Heart left ventricle (tissue), 16 donors: ENCODE measurements at regions of chr18 and their contacts with region 1.

Region 1: GRCh38 chr18:9516437-9517064 is 41.2 kb downstream of the RALBP1 start:
- DNase-seq: no peak
- ATAC-seq: peak in 1 of 4 donors; percentile 46
- H3K4me3 ChIP-seq: no peak overlapping the region
- H3K27ac ChIP-seq: peak overlapping the region in 1 of 12 donors; percentile 38
- H3K4me1 ChIP-seq: peaks cover 0 to 31% (median 1%) of the 10 kb centered on the region in 12 donors
- H3K27me3 ChIP-seq: no peaks in the 10 kb centered on the region
- CTCF ChIP-seq: peak; percentile 76 to 89 (median 82)
- POLR2A ChIP-seq: no peak

Region 2: GRCh38 chr18:9066817-9067306 is 449.7 kb before region 1 on chr18:
- intact Hi-C with region 1: loop called in 5 of 10 experiments (anchors 5 to 10 kb)
- DNase-seq: no peak
- ATAC-seq: no peak
- H3K4me3 ChIP-seq: no peak overlapping the region
- H3K27ac ChIP-seq: no peak overlapping the region
- H3K4me1 ChIP-seq: peaks cover 0 to 37% (median 0%) of the 10 kb centered on the region in 12 donors
- H3K27me3 ChIP-seq: no peaks in the 10 kb centered on the region
- CTCF ChIP-seq: no peak
- POLR2A ChIP-seq: no peak

Region 3: GRCh38 chr18:9079818-9080528 is 436.6 kb before region 1 on chr18:
- intact Hi-C with region 1: loop called in 4 of 10 experiments (anchors 10 kb)
- DNase-seq: no peak
- ATAC-seq: peak in 2 of 4 donors; percentile 41 to 55
- H3K4me3 ChIP-seq: no peak overlapping the region
- H3K27ac ChIP-seq: peak overlapping the region in 2 of 12 donors; percentile 13 to 84
- H3K4me1 ChIP-seq: peaks cover 0 to 48% (median 0%) of the 10 kb centered on the region in 12 donors
- H3K27me3 ChIP-seq: no peaks in the 10 kb centered on the region
- CTCF ChIP-seq: no peak
- POLR2A ChIP-seq: no peak

Region 4: DNA sequence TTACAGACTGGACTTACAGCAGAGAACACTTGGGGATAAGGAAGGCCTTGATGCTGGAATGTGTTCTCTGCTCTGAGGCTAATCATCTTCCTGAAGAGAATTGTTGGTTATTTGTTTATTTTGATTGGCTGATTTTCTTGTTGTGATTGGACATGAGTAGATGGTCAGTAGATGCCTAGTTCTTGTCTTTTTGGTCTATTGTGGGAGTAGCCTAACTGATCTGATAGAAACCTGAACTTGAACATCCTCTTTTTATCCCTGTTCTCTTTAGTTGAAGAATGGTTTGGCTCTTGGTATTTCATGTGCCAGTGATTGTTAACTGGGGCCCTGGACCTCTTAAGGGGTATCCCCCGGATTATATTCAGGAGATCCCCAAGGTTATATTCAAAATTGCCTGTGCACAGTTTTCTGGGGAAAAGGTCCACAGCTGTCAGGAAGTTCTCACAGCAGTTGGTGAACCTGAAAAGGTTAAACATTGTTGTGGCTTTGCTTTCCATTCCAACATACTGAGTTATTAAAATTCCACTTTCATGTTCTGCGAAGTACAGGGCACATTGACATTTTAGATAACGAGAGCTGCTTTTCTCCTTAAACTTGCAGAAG is 168.4 kb before region 1 on chr18:
- intact Hi-C with region 1: loop called in 1 of 10 experiments (anchors 10 kb)
- DNase-seq: no peak
- ATAC-seq: no peak
- H3K4me3 ChIP-seq: no peak overlapping the region
- H3K27ac ChIP-seq: no peak overlapping the region
- H3K4me1 ChIP-seq: peaks cover 0 to 18% (median 4%) of the 10 kb centered on the region in 12 donors
- H3K27me3 ChIP-seq: no peaks in the 10 kb centered on the region
- CTCF ChIP-seq: no peak
- POLR2A ChIP-seq: no peak

Region 5: DNA sequence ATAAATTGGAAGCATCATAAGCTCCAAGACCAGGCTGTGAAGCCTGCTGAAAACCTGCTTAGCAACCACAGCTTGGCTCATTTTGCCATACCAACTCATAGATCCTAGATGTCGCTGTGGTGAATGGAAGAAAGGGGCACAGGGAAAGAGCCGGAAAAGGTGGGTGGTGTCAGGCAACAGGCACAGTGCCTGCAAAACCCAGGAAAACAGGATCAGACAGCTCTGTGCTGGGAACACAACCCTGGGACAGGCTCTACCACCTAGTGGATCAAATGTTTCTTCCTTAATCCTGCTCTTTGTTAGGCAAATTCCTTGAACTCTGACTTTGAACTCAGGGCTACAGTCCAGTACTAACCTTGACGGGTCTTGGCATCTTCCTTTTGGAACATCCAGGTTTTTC is 150.4 kb before region 1 on chr18:
- intact Hi-C with region 1: loop called in 4 of 10 experiments (anchors 10 kb)
- DNase-seq: peak in 2 of 5 donors; percentile 19 to 33
- ATAC-seq: peak in 3 of 4 donors; percentile 59 to 76 (median 71)
- H3K4me3 ChIP-seq: no peak overlapping the region
- H3K27ac ChIP-seq: no peak overlapping the region
- H3K4me1 ChIP-seq: peaks cover 0 to 2% (median 0%) of the 10 kb centered on the region in 12 donors
- H3K27me3 ChIP-seq: no peaks in the 10 kb centered on the region
- CTCF ChIP-seq: peak in 9 of 12 donors; percentile 8 to 48 (median 20)
- POLR2A ChIP-seq: no peak

Region 6: DNA sequence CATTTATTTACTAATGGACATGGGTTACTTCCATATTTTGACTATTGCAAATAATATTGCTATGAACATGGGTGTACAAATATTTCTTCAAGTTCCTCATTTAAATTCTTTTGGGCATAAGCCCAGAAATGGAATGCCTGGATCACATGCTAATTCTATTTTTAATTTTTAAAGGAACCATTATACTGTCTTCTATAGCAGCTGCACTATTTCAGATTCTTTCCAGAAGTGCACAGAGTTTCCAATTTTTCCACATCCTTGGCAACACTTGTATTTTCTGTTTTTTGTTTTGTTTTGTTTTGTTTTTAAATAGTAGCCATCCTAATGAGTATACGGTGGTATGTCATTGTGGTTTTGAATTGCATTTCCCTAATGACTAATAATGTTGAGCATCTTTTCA is 49.7 kb before region 1 on chr18:
- intact Hi-C with region 1: loop called in 1 of 10 experiments (anchors 10 kb)
- DNase-seq: no peak
- ATAC-seq: no peak
- H3K4me3 ChIP-seq: no peak overlapping the region
- H3K27ac ChIP-seq: no peak overlapping the region
- H3K4me1 ChIP-seq: no peaks in the 10 kb centered on the region
- H3K27me3 ChIP-seq: no peaks in the 10 kb centered on the region
- CTCF ChIP-seq: no peak
- POLR2A ChIP-seq: no peak

Region 7: DNA sequence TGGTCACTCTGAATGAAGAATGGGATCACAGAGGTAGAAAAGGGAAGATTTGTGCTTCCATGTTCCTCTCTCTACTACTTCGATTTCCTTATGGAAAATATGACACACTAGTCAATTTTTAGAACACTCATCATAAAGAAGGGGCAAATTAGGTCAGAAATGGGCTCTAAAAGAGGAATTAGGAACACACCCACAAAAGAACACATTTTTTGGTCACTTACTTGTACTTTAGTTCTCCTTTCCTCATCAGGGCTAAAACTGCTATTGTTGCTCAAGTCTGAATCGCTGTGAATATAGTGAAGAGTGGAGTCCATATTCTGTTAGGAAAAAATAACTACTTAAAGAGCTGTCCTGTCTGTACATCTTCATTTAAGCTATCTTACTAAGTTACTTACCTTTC is 45.2 kb after region 1 on chr18:
- intact Hi-C with region 1: no loop called
- DNase-seq: no peak
- ATAC-seq: peak in 2 of 4 donors; percentile 49 to 54
- H3K4me3 ChIP-seq: no peak overlapping the region
- H3K27ac ChIP-seq: peak overlapping the region in 1 of 12 donors; percentile 22
- H3K4me1 ChIP-seq: peaks cover 0 to 41% (median 13%) of the 10 kb centered on the region in 12 donors
- H3K27me3 ChIP-seq: no peaks in the 10 kb centered on the region
- CTCF ChIP-seq: no peak
- POLR2A ChIP-seq: no peak

Region 8: DNA sequence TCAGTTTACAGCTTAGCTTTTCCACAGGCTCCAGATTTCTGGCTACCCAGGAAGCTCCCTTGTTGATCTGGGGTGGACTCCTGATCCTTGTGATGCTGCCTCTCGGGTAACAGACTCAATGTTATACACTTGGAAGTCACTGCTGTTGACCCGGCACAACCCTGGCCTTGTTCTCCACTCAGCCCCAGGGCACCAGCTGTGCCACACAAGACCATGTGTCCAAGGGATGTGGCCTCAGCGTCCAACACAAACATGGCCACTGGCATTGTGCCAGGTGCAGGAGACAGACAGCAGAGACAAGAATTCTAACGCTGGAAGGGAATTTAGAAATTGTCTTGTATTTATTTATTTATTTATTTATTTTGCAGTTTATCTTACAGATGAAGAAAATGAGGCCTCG is 136.8 kb after region 1 on chr18:
- intact Hi-C with region 1: no loop called
- DNase-seq: peak in 4 of 5 donors; percentile 15 to 55 (median 36)
- ATAC-seq: peak in 2 of 4 donors; percentile 41 to 50
- H3K4me3 ChIP-seq: no peak overlapping the region
- H3K27ac ChIP-seq: no peak overlapping the region
- H3K4me1 ChIP-seq: peaks cover 0 to 5% (median 0%) of the 10 kb centered on the region in 12 donors
- H3K27me3 ChIP-seq: no peaks in the 10 kb centered on the region
- CTCF ChIP-seq: no peak
- POLR2A ChIP-seq: no peak

Region 9: DNA sequence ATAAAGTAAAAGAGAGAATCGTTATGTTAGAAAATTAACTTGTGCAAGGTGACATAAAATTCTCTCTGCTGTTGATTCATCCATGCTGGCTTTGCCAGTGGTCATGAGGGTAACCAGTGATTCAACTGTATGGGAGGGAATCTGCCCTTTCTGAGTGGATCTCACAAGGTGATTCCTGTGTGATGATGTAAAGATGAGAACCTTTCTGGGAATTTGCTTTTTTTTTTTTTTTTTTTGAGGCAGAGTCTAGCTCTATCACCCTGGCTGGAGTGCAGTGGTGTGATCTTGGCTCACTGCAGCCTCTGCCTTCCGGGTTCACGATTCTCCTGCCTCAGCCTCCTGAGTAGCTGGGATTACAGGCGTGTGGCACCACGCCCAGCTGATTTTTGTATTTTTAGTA is 214.8 kb after region 1 on chr18:
- intact Hi-C with region 1: no loop called
- DNase-seq: no peak
- ATAC-seq: no peak
- H3K4me3 ChIP-seq: no peak overlapping the region
- H3K27ac ChIP-seq: no peak overlapping the region
- H3K4me1 ChIP-seq: no peaks in the 10 kb centered on the region
- H3K27me3 ChIP-seq: no peaks in the 10 kb centered on the region
- CTCF ChIP-seq: no peak
- POLR2A ChIP-seq: no peak

Region 10: DNA sequence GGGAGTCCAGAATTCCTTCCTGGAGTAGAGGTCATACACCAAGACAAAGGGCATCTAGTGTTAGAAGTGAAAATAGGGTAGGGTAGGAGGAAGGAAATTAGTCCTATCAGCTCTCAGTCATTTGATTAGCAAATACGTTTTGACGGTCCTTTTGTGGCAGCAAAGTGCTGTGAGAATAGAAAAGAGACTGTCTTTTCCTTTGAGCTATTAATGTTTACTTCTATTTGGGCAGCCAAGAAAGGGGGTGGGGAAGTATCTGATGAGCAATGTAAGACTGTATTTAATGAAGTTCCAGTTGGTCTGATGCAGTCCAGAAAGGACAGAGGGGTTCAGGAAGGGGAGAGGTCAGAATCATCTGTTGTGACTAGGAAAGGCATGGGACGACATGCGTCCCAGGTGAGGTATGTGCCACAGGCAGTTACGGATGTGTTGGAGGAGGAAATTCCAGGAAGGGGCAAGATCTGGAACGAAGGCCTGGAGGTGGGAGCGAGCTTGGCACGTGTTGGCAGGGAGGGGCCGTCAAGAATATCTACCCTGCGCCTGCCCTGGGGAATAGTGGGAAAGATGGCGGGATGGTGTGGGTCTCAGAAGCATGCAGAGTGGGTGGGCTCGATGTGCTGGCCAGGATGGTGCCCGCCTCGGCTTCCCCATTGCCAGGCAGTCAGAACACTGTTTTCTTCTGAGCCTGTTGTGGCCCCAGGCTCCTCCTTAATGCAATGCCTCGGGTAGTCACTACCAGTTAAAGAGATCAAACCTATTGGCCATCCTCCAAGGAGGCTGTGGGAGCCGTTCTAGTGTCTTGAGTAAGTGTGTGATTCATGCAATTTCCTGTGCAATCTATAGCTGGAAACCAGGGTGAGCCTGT is 311.3 kb after region 1 on chr18:
- intact Hi-C with region 1: no loop called
- DNase-seq: peak in 2 of 5 donors; percentile 55 to 57
- ATAC-seq: peak in 3 of 4 donors; percentile 2 to 60 (median 18)
- H3K4me3 ChIP-seq: no peak overlapping the region
- H3K27ac ChIP-seq: peak overlapping the region in 6 of 12 donors; percentile 2 to 90 (median 20)
- H3K4me1 ChIP-seq: peaks cover 0 to 66% (median 24%) of the 10 kb centered on the region in 12 donors
- H3K27me3 ChIP-seq: no peaks in the 10 kb centered on the region
- CTCF ChIP-seq: no peak
- POLR2A ChIP-seq: no peak